ENCODE measurements at regions of chr1 and their contacts with region 1.

Region 1: GRCh38 chr1:21232044-21232443 is 55.3 kb upstream of the EIF4G3 start:
- DNase-seq: no peak
- ATAC-seq: peak; percentile 69
- H3K4me3 Mint-ChIP-seq: no peak overlapping the region
- H3K27ac Mint-ChIP-seq: no peak overlapping the region
- H3K4me1 Mint-ChIP-seq: no peaks in the 10 kb centered on the region
- H3K27me3 Mint-ChIP-seq: no peaks in the 10 kb centered on the region

Region 2: DNA sequence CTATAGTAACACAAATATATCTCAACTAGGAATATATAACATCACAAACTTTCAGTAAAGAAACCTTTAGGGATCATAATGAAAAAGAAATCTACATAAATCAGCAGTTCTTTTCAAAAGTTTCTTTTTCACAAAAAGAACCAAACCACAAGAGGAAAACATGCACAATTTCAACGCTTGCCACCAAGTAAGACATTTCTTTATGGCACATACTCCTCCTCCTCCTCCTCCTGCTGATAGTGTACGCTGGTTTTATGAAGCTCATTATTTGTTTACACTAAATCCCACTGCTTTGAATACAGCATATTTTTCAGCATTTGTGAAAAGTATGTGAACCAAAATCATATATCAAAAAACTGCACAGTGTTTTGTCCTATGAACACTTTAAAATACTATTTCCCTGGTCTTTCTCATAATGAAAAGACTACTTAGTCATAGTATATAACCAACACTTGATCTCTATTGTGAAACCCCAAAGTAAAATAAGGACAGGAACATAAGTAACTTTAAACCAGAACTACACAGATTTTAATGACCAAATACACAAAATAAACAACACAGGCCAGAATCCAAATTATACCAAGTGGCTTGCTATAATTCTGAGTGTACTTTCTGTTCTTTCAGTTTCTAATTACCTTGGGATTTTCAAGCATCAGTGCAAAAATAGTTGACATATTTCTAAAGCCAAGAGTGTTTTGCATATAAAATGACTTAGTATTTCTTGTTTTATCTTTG is 239.6 kb before region 1 on chr1:
- CTCF ChIA-PET with region 1: no interaction called
- DNase-seq: no peak
- ATAC-seq: peak; percentile 73
- H3K4me3 Mint-ChIP-seq: peak overlapping the region; percentile 63
- H3K27ac Mint-ChIP-seq: peak overlapping the region; percentile 94
- H3K4me1 Mint-ChIP-seq: peaks cover 33% of the 10 kb centered on the region
- H3K27me3 Mint-ChIP-seq: no peaks in the 10 kb centered on the region

Region 3: GRCh38 chr1:21005466-21006239 is 226.4 kb before region 1 on chr1:
- CTCF ChIA-PET with region 1: no interaction called
- DNase-seq: no peak
- ATAC-seq: no peak
- H3K4me3 Mint-ChIP-seq: no peak overlapping the region
- H3K27ac Mint-ChIP-seq: no peak overlapping the region
- H3K4me1 Mint-ChIP-seq: peaks cover 13% of the 10 kb centered on the region
- H3K27me3 Mint-ChIP-seq: no peaks in the 10 kb centered on the region

Region 4: GRCh38 chr1:21216835-21217811 is 14.9 kb before region 1 on chr1:
- CTCF ChIA-PET with region 1: interaction called, 29 read pairs
- DNase-seq: peak; percentile 78
- ATAC-seq: peak; percentile 59
- H3K4me3 Mint-ChIP-seq: no peak overlapping the region
- H3K27ac Mint-ChIP-seq: no peak overlapping the region
- H3K4me1 Mint-ChIP-seq: no peaks in the 10 kb centered on the region
- H3K27me3 Mint-ChIP-seq: no peaks in the 10 kb centered on the region

Region 5: GRCh38 chr1:21244986-21245687 is 13.1 kb after region 1 on chr1:
- CTCF ChIA-PET with region 1: interaction called, 16 read pairs
- DNase-seq: no peak
- ATAC-seq: no peak
- H3K4me3 Mint-ChIP-seq: no peak overlapping the region
- H3K27ac Mint-ChIP-seq: no peak overlapping the region
- H3K4me1 Mint-ChIP-seq: peaks cover 2% of the 10 kb centered on the region
- H3K27me3 Mint-ChIP-seq: no peaks in the 10 kb centered on the region

Region 6: GRCh38 chr1:21361506-21361905 is 129.5 kb after region 1 on chr1:
- CTCF ChIA-PET with region 1: interaction called, 138 read pairs
- DNase-seq: no peak
- ATAC-seq: no peak
- H3K4me3 Mint-ChIP-seq: no peak overlapping the region
- H3K27ac Mint-ChIP-seq: no peak overlapping the region
- H3K4me1 Mint-ChIP-seq: peaks cover 1% of the 10 kb centered on the region
- H3K27me3 Mint-ChIP-seq: peaks cover 2% of the 10 kb centered on the region